ENCODE measurements at regions of chr15 and their contacts with region 1.

Region 1: GRCh38 chr15:70584838-70585706 is 178.3 kb downstream of the UACA start:
- DNase-seq: peak; percentile 8
- ATAC-seq: peak; percentile 87
- H3K4me3 ChIP-seq: peak overlapping the region; percentile 36 to 51
- H3K27ac ChIP-seq: peak overlapping the region; percentile 53
- H3K4me1 ChIP-seq: peaks cover 12% of the 10 kb centered on the region
- H3K27me3 ChIP-seq: no peaks in the 10 kb centered on the region
- CTCF ChIP-seq: peak; percentile 94

Region 2: GRCh38 chr15:70382762-70383458 is 202.2 kb before region 1 on chr15:
- CTCF ChIA-PET with region 1: no interaction called
- POLR2A ChIA-PET with region 1: no interaction called
- in situ Hi-C with region 1: no loop called
- intact Hi-C with region 1: no loop called
- DNase-seq: no peak
- ATAC-seq: no peak
- H3K4me3 ChIP-seq: no peak overlapping the region
- H3K27ac ChIP-seq: no peak overlapping the region
- H3K4me1 ChIP-seq: peaks cover 10% of the 10 kb centered on the region; the same call in 1 of the 2 replicates
- H3K27me3 ChIP-seq: no peaks in the 10 kb centered on the region
- CTCF ChIP-seq: no peak

Region 3: DNA sequence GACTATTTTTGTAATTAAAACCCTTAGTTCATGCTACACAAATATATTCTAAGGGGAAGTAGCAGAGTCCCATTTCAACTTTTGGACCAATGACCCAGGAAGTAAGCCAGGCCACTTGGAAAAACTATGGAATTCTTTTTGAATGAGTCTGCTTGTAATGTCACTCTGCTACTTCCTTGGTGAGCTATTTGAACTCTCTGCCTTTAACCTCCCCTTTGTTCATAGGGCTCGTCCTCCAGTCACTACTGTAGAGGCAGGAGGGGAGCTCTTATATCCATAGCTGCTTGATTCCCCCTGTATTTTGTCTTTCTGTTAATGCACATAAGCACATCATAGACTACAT is 58.7 kb after region 1 on chr15:
- CTCF ChIA-PET with region 1: no interaction called
- POLR2A ChIA-PET with region 1: no interaction called
- in situ Hi-C with region 1: no loop called
- intact Hi-C with region 1: loop called (anchors 10 kb)
- DNase-seq: peak; percentile 35
- ATAC-seq: peak; percentile 64
- H3K4me3 ChIP-seq: no peak overlapping the region
- H3K27ac ChIP-seq: no peak overlapping the region; the same call in 1 of the 2 replicates
- H3K4me1 ChIP-seq: peaks cover 7% of the 10 kb centered on the region; the same call in 1 of the 2 replicates
- H3K27me3 ChIP-seq: no peaks in the 10 kb centered on the region
- CTCF ChIP-seq: no peak

Region 4: GRCh38 chr15:70870051-70870450 is 285.0 kb after region 1 on chr15:
- CTCF ChIA-PET with region 1: no interaction called
- POLR2A ChIA-PET with region 1: no interaction called
- in situ Hi-C with region 1: no loop called
- intact Hi-C with region 1: no loop called
- DNase-seq: no peak
- ATAC-seq: no peak; the same call in 1 of the 2 replicates
- H3K4me3 ChIP-seq: no peak overlapping the region
- H3K27ac ChIP-seq: no peak overlapping the region
- H3K4me1 ChIP-seq: peaks cover 11% of the 10 kb centered on the region; the same call in 1 of the 2 replicates
- H3K27me3 ChIP-seq: no peaks in the 10 kb centered on the region
- CTCF ChIP-seq: no peak

Region 5: GRCh38 chr15:72227720-72228119 is 1642.6 kb after region 1 on chr15:
- CTCF ChIA-PET with region 1: interaction called, 19 read pairs
- POLR2A ChIA-PET with region 1: no interaction called
- in situ Hi-C with region 1: no loop called
- intact Hi-C with region 1: no loop called
- DNase-seq: no peak
- ATAC-seq: no peak
- H3K4me3 ChIP-seq: peak overlapping the region; percentile 84 to 97
- H3K27ac ChIP-seq: peak overlapping the region; percentile 96
- H3K4me1 ChIP-seq: peaks cover 49% of the 10 kb centered on the region
- H3K27me3 ChIP-seq: no peaks in the 10 kb centered on the region
- CTCF ChIP-seq: no peak

Measured in Panc1 (cell line).